Endothelial cell of umbilical vein (primary cell): ENCODE measurements at regions of chr6 and their contacts with region 1.

Region 1: DNA sequence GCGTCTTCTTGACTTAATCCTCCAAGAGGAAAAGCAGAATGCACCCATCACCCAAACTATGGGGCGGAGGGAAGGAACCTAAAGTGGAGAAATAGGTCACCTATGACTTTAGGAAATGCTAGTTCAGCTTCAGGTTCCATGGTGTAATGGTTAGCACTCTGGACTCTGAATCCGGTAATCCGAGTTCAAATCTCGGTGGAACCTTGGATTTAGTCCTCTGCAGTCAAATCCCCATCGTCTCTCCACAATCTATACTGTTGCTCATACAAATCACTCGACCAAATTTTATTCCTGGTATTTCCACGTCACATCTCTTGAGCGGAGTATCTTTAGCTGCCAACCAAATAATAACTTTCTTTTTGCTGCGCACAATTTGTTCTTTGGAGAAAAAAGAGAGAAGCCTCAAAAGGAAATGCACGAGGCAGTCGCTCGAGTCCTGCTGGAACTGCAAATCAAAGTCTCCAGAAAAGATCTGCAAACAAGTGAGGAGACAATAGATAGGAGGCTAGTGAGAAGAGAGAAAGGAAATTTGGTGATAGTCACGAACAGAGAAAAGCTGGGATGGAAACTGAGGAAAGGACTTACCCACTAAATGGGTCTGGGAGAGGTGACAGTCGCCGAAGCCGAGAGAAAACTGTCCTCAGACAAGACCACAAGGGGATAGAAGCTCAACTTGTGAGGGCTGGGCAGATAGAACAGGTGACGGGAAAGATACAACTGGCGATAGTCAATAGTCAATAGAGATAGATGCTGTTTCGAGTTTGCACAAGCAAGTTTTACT is 16.6 kb downstream of the POM121L2 start:
- DNase-seq: peak; percentile 37
- H3K4me3 ChIP-seq: peak overlapping the region; percentile 18 to 80 (median 72)
- H3K27ac ChIP-seq: no peak overlapping the region
- H3K4me1 ChIP-seq: peaks cover 17% of the 10 kb centered on the region
- H3K27me3 ChIP-seq: peaks cover 16 to 20% of the 10 kb centered on the region in 2 experiments
- CTCF ChIP-seq: no peak
- POLR2A ChIP-seq: no peak

Region 2: DNA sequence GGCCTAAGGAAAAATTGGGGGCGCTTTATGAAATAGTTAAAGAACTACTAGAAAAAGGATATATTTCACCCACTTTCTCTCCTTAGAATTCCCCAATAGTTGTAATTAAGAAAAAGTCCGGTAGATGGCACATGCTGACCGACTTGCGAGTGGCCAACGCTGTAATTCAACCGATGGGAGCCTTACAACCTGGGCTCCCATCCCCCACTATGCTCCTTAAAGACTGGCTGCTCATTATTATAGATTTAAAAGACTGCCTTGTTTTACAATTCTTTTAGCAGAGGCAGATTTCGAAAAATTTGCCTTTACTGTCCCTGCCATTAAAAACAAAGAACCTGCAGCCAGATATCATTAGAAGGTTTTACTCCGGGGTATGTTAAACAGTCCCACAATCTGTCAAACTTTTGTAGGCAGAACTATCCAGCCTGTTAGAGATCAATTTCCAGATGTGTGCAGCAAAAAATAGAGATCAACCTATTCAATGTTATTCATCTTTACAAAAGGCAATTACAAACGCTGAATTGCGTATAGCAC is 106.5 kb before region 1 on chr6:
- CTCF ChIA-PET with region 1: no interaction called
- POLR2A ChIA-PET with region 1: no interaction called
- dilution Hi-C with region 1: no loop called
- intact Hi-C with region 1: loop called (anchors 5 kb)
- DNase-seq: peak; percentile 83
- H3K4me3 ChIP-seq: peak overlapping the region; percentile 59 to 80 (median 66)
- H3K27ac ChIP-seq: peak overlapping the region; percentile 37
- H3K4me1 ChIP-seq: no peaks in the 10 kb centered on the region
- H3K27me3 ChIP-seq: peaks cover 0 to 4% of the 10 kb centered on the region in 2 experiments
- CTCF ChIP-seq: peak; percentile 54 to 55
- POLR2A ChIP-seq: no peak

Region 3: GRCh38 chr6:27267857-27268434 is 27.5 kb before region 1 on chr6:
- CTCF ChIA-PET with region 1: no interaction called
- POLR2A ChIA-PET with region 1: no interaction called
- dilution Hi-C with region 1: no loop called
- intact Hi-C with region 1: no loop called
- DNase-seq: no peak
- H3K4me3 ChIP-seq: no peak overlapping the region
- H3K27ac ChIP-seq: no peak overlapping the region
- H3K4me1 ChIP-seq: no peaks in the 10 kb centered on the region
- H3K27me3 ChIP-seq: peaks cover 10 to 16% of the 10 kb centered on the region in 2 experiments
- CTCF ChIP-seq: no peak
- POLR2A ChIP-seq: no peak

Region 4: GRCh38 chr6:27280064-27280539 is 15.4 kb before region 1 on chr6:
- CTCF ChIA-PET with region 1: interaction called, 4 read pairs
- POLR2A ChIA-PET with region 1: no interaction called
- dilution Hi-C with region 1: no loop called
- intact Hi-C with region 1: loop called (anchors 1 kb)
- DNase-seq: peak; percentile 39
- H3K4me3 ChIP-seq: peak overlapping the region; percentile 16 to 58 (median 54)
- H3K27ac ChIP-seq: no peak overlapping the region
- H3K4me1 ChIP-seq: peaks cover 6% of the 10 kb centered on the region
- H3K27me3 ChIP-seq: peaks cover 30 to 37% of the 10 kb centered on the region in 2 experiments
- CTCF ChIP-seq: no peak
- POLR2A ChIP-seq: no peak

Region 5: GRCh38 chr6:27479319-27480182 is 184.1 kb after region 1 on chr6:
- CTCF ChIA-PET with region 1: no interaction called
- POLR2A ChIA-PET with region 1: no interaction called
- dilution Hi-C with region 1: no loop called
- intact Hi-C with region 1: loop called (anchors 5 kb)
- DNase-seq: peak; percentile 94
- H3K4me3 ChIP-seq: peak overlapping the region; percentile 78 to 93 (median 88)
- H3K27ac ChIP-seq: peak overlapping the region; percentile 82
- H3K4me1 ChIP-seq: peaks cover 7% of the 10 kb centered on the region
- H3K27me3 ChIP-seq: peaks cover 11 to 16% of the 10 kb centered on the region in 2 experiments
- CTCF ChIP-seq: no peak
- POLR2A ChIP-seq: no peak

Region 6: DNA sequence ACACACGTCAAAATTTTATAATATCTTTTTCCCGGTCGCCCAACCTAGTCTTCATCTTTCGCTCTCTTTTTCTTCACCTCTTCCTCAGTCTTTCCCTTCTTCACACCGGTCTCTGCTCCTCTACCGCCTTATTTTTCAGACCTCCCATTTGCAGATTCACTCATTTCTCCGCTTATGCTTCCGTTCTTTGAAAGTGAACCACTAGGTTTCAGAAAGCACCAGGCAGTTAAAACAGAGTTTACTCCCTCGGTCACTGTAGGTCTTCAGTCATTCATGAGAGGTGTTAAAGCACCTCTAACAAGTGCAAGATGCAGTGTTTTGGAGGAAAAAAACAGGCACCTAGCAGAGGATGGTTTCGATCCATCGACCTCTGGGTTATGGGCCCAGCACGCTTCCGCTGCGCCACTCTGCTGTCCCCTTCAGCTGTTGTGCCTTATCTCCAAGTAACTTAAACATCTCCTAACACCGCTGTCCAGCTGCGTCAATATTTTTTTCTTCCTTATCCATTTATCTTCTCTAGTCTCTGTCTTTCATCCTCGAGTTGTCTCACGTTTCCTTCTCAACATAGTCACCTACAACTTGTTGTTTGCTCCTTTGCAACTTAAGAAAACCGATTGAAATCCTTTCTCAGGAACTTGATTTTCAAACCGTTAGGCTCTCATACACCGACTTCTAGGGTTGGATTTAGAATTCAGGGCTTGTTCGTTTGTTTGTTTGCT is 297.1 kb after region 1 on chr6:
- CTCF ChIA-PET with region 1: no interaction called
- POLR2A ChIA-PET with region 1: no interaction called
- dilution Hi-C with region 1: no loop called
- intact Hi-C with region 1: no loop called
- DNase-seq: peak; percentile 44
- H3K4me3 ChIP-seq: peak overlapping the region in 2 of 3 experiments; percentile 54 to 69
- H3K27ac ChIP-seq: no peak overlapping the region
- H3K4me1 ChIP-seq: peaks cover 10% of the 10 kb centered on the region
- H3K27me3 ChIP-seq: peaks cover 13 to 14% of the 10 kb centered on the region in 2 experiments
- CTCF ChIP-seq: no peak
- POLR2A ChIP-seq: no peak

Region 7: GRCh38 chr6:27672113-27672799 is 376.8 kb after region 1 on chr6:
- CTCF ChIA-PET with region 1: no interaction called
- POLR2A ChIA-PET with region 1: no interaction called
- dilution Hi-C with region 1: no loop called
- intact Hi-C with region 1: loop called (anchors 5 kb)
- DNase-seq: peak; percentile 40
- H3K4me3 ChIP-seq: no peak overlapping the region
- H3K27ac ChIP-seq: no peak overlapping the region
- H3K4me1 ChIP-seq: peaks cover 10% of the 10 kb centered on the region
- H3K27me3 ChIP-seq: peaks cover 7 to 11% of the 10 kb centered on the region in 2 experiments
- CTCF ChIP-seq: no peak
- POLR2A ChIP-seq: no peak